Dorsolateral prefrontal cortex (tissue), 120 donors: ENCODE measurements at regions of chr4 and their contacts with region 1.

Region 1: DNA sequence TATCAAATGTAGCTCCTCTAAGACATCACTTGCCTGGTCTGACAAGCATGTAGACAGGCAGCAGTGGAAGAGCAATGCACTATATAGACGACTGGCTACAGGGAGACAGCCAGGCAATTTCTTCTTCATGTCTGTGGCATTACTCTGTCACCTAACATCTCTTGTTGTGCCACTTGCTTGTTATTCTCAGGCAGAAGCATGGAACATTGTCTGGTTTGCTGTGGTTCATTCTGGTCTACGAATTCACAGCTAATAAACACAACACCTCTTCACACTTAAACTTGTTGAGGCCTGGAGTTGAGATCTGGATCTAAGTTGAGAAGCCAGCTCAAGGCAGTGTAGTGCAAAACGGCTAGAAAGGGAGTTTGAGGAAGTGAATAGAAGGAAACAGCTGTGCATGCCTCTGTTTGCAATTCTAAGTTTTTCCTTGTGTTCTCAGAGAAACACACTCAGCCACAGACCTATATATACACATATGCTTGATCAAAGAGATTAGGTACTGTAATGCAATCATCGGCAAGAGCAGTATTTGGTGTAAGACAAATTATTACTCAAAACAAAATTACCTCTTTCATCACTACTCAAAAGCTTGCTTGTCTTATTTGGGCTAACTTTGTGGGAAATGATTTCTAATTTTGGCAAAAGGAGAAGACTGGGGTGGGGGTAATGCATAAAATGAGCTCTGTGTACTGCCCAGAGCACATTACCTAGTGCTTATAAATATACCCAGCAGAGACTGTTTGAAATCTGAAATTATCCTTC is 243.8 kb downstream of the PPP3CA start:
- DNase-seq: no peak
- H3K4me3 ChIP-seq: peak overlapping the region in 22 of 59 donors; percentile 0 to 35 (median 18)
- H3K27ac ChIP-seq: peak overlapping the region; percentile 3 to 88 (median 76)
- H3K27me3 ChIP-seq: no peaks in the 10 kb centered on the region
- CTCF ChIP-seq: no peak

Region 2: DNA sequence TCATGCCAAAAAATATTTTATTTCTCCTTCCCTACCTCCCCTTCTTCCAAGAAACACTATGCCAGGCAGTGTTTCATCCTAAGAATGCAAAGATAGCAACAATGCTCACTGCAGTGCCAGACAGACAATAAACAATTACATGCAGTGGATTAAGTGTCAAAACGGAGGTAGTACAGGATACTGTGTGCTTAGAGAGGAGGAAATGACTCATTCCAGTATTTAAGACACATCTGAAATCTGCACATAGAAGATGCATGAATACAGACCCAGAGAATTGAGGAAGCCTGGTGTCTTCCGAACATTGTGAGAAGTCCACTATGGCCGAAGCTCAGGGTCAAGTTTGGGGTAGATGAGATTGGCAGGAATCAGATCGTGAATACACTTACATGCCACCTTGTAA is 82.6 kb before region 1 on chr4:
- intact Hi-C with region 1: loop called in 1 of 2 experiments (anchors 10 kb)
- DNase-seq: no peak
- H3K4me3 ChIP-seq: no peak overlapping the region
- H3K27ac ChIP-seq: peak overlapping the region in 4 of 59 donors; percentile 9 to 24 (median 18)
- H3K27me3 ChIP-seq: no peaks in the 10 kb centered on the region
- CTCF ChIP-seq: no peak

Region 3: GRCh38 chr4:101155368-101155767 is 51.8 kb after region 1 on chr4:
- intact Hi-C with region 1: no loop called
- DNase-seq: no peak
- H3K4me3 ChIP-seq: no peak overlapping the region
- H3K27ac ChIP-seq: peak overlapping the region in 4 of 59 donors; percentile 3 to 80 (median 23)
- H3K27me3 ChIP-seq: no peaks in the 10 kb centered on the region
- CTCF ChIP-seq: no peak